HCT116 (cell line): ENCODE measurements at regions of chr9 and their contacts with region 1.

Region 1: GRCh38 chr9:100598641-100599145 is 20.8 kb downstream of the CAVIN4 start:
- DNase-seq: peak; percentile 75
- ATAC-seq: peak; percentile 89
- H3K4me3 ChIP-seq: peak overlapping the region; percentile 41 to 55
- H3K27ac ChIP-seq: peak overlapping the region; percentile 16
- H3K4me1 ChIP-seq: peaks cover 12 to 30% of the 10 kb centered on the region in 2 experiments
- H3K27me3 ChIP-seq: no peaks in the 10 kb centered on the region
- CTCF ChIP-seq: no peak
- POLR2A ChIP-seq: peak; percentile 73
- RAD21 ChIP-seq: no peak

Region 2: DNA sequence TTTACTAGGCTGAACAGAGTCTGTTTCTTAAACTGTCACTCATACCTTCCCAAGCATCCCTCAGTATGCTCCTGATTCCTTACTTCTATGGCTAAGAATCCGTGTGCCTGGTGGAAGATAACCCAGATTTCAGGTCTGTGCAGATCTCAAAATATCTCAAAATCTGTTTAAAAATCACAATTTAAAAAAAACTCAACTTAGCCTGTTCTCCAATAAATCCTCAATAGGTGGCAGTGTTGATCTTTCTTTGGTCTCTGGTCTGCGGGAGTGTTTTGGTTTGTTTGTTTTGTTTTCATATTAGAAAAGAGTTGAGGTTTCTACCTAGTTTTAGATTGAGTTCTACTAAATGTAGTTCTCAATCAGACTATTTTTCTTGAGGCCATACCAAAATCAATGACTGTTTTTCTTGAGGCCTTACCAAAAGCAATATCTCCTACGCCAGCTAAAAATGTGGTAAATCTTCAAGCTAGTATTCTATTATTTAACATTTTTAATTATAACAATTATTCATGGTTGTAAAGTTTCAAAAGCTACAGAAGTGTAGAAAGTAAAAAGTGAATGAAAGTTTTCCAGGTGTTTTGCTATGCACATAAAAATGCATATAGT is 1435.8 kb before region 1 on chr9:
- CTCF ChIA-PET with region 1: interaction called, 4 read pairs
- POLR2A ChIA-PET with region 1: no interaction called
- RAD21 ChIA-PET with region 1: no interaction called
- intact Hi-C with region 1: loop called (anchors 2 kb)
- DNase-seq: peak; percentile 22
- ATAC-seq: peak; percentile 57
- H3K4me3 ChIP-seq: no peak overlapping the region
- H3K27ac ChIP-seq: no peak overlapping the region
- H3K4me1 ChIP-seq: no peaks in the 10 kb centered on the region
- H3K27me3 ChIP-seq: no peaks in the 10 kb centered on the region
- CTCF ChIP-seq: peak; percentile 44 to 69 (median 64); a peak in 5 of 6 replicates
- POLR2A ChIP-seq: no peak
- RAD21 ChIP-seq: peak; percentile 82

Region 3: GRCh38 chr9:99807276-99807852 is 791.3 kb before region 1 on chr9:
- CTCF ChIA-PET with region 1: no interaction called
- POLR2A ChIA-PET with region 1: no interaction called
- RAD21 ChIA-PET with region 1: no interaction called
- intact Hi-C with region 1: loop called (anchors 5 kb)
- DNase-seq: no peak
- ATAC-seq: peak; percentile 76
- H3K4me3 ChIP-seq: no peak overlapping the region
- H3K27ac ChIP-seq: no peak overlapping the region
- H3K4me1 ChIP-seq: peaks cover 15 to 28% of the 10 kb centered on the region in 2 experiments
- H3K27me3 ChIP-seq: no peaks in the 10 kb centered on the region
- CTCF ChIP-seq: peak; percentile 62 to 85 (median 79); a peak in 5 of 6 replicates
- POLR2A ChIP-seq: no peak
- RAD21 ChIP-seq: peak; percentile 74

Region 4: DNA sequence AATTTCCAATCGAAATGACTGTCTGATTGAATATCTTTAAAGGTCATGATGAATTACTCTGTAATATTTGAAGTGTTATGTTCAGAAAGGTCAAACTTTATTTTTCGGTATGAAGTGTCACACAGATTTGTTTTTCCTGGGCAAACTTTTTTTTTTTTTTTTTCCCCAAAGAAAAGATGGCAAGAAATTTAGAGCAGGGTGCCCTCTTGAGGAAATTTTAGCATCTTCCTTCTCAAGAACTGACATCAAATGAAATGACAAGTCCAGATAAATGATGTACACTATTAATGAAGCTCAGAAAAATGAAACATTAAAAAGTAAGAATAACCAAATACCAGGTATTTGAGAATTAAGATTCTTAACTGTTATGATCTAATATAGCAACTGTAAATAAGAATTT is 376.0 kb before region 1 on chr9:
- CTCF ChIA-PET with region 1: interaction called, 6 read pairs
- POLR2A ChIA-PET with region 1: no interaction called
- RAD21 ChIA-PET with region 1: no interaction called
- intact Hi-C with region 1: loop called (anchors 5 kb)
- DNase-seq: no peak
- ATAC-seq: no peak
- H3K4me3 ChIP-seq: no peak overlapping the region
- H3K27ac ChIP-seq: no peak overlapping the region
- H3K4me1 ChIP-seq: no peaks in the 10 kb centered on the region
- H3K27me3 ChIP-seq: no peaks in the 10 kb centered on the region
- CTCF ChIP-seq: peak; percentile 27 to 57 (median 32); a peak in 4 of 6 replicates
- POLR2A ChIP-seq: no peak
- RAD21 ChIP-seq: peak; percentile 58

Region 5: DNA sequence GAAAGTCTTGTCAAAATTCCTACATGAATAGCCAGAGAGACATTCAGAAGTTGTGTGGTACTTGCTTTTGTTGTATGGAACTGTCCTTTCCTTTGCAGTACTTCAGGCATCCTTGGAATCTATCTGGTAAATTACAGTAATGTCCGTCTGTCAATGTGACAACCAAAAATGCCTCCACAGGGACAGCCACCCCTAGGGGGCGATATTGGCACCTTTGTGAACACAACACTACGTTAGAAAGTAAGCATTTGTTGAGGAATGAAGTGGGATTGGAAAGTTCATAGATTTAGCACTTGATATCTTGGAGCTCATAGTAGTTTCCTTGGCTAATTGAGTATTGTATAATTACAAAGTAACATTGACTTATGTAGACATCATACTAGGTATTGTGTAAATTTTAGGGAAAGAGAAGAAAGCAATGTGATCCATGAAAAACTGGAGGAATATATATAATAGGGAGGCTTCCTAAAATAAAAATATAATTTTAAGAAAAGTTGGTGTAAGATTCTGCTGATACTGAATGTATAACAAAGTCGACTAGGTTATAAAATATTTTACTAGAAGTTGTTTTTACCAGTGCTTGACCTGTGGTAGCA is 93.0 kb before region 1 on chr9:
- CTCF ChIA-PET with region 1: no interaction called
- POLR2A ChIA-PET with region 1: no interaction called
- RAD21 ChIA-PET with region 1: no interaction called
- intact Hi-C with region 1: loop called (anchors 2 kb)
- DNase-seq: peak; percentile 61
- ATAC-seq: peak; percentile 95
- H3K4me3 ChIP-seq: no peak overlapping the region
- H3K27ac ChIP-seq: no peak overlapping the region
- H3K4me1 ChIP-seq: peaks cover 0 to 3% of the 10 kb centered on the region in 2 experiments; a peak in 1 of 4 replicates
- H3K27me3 ChIP-seq: no peaks in the 10 kb centered on the region
- CTCF ChIP-seq: peak; percentile 65 to 98 (median 96)
- POLR2A ChIP-seq: no peak
- RAD21 ChIP-seq: peak; percentile 71

Region 6: DNA sequence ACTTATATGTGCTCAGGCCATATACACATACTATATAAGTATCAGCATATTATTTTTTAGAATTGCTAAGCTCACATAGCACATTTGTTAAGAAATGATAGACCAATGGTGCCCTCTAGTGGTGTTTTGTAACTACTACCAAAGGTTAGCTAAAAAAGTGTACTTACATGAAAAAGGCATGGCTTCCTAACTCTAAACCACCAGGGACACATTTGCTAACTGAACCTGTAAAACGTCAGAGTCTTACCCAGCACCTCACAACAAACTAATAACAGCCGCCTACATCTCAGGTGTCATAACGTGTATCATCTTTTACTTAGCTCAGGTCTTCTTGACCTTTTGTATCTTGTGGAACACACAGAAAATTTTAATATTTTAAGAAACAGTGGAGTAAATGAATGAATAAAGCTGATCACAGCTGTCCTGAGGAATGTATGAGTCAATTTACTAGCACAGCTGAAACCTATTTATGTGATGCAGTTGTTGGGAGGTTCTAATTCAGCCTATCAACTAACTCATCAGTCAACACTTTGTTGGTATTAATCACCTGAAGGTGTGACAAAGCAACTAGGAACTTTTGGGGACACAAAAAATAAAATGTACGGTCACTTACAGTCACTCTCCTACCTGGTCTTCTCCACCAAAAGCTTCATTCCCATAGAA is 713.2 kb after region 1 on chr9:
- CTCF ChIA-PET with region 1: interaction called, 152 read pairs
- POLR2A ChIA-PET with region 1: interaction called, 8 read pairs
- RAD21 ChIA-PET with region 1: interaction called, 7 to 16 read pairs
- intact Hi-C with region 1: loop called (anchors 1 kb)
- DNase-seq: peak; percentile 83
- ATAC-seq: peak; percentile 87
- H3K4me3 ChIP-seq: no peak overlapping the region
- H3K27ac ChIP-seq: no peak overlapping the region
- H3K4me1 ChIP-seq: no peaks in the 10 kb centered on the region
- H3K27me3 ChIP-seq: peaks cover 49% of the 10 kb centered on the region
- CTCF ChIP-seq: peak; percentile 46 to 77 (median 77); a peak in 5 of 6 replicates
- POLR2A ChIP-seq: no peak
- RAD21 ChIP-seq: peak; percentile 80